H1 (cell line): ENCODE measurements at regions of chr3 and their contacts with region 1.

Region 1: GRCh38 chr3:34106879-34107278 is 308.4 kb downstream of the PDCD6IP start:
- DNase-seq: peak; percentile 58 to 73
- H3K4me3 ChIP-seq: no peak overlapping the region
- H3K27ac ChIP-seq: no peak overlapping the region
- H3K4me1 ChIP-seq: no peaks in the 10 kb centered on the region
- H3K27me3 ChIP-seq: no peaks in the 10 kb centered on the region
- CTCF ChIP-seq: peak; percentile 60 to 92 (median 80)
- EP300 ChIP-seq: no peak
- POLR2A ChIP-seq: no peak
- RAD21 ChIP-seq: peak; percentile 86 to 88

Region 2: GRCh38 chr3:34008191-34008590 is 98.7 kb before region 1 on chr3:
- CTCF ChIA-PET with region 1: no interaction called
- POLR2A ChIA-PET with region 1: no interaction called
- DNase-seq: peak in 1 of 2 experiments; percentile 43
- H3K4me3 ChIP-seq: no peak overlapping the region
- H3K27ac ChIP-seq: no peak overlapping the region
- H3K4me1 ChIP-seq: peaks cover 0 to 10% (median 6%) of the 10 kb centered on the region in 4 experiments; a peak in 4 of 7 replicates
- H3K27me3 ChIP-seq: no peaks in the 10 kb centered on the region
- CTCF ChIP-seq: no peak
- EP300 ChIP-seq: no peak
- POLR2A ChIP-seq: no peak
- RAD21 ChIP-seq: no peak

Region 3: DNA sequence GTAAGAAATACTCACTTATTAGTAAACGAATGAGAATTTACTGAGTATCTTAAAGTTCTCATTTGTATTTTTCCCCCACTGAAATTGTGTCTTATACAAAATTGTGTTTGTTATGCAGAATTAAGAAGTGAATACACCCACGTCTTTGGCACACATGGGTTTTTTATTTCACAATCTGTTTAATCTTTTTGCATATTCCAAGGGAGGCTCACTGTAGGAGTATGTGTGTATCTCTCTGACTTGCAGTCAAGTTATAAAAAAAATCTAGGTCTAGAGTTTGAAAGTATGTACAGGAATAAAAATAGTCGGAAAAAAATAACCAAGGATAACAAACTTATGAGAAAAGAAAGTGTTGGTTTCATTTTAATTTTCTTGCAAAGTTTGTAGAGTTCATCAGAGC is 53.3 kb before region 1 on chr3:
- CTCF ChIA-PET with region 1: no interaction called
- POLR2A ChIA-PET with region 1: no interaction called
- DNase-seq: no peak
- H3K4me3 ChIP-seq: no peak overlapping the region
- H3K27ac ChIP-seq: no peak overlapping the region
- H3K4me1 ChIP-seq: no peaks in the 10 kb centered on the region
- H3K27me3 ChIP-seq: no peaks in the 10 kb centered on the region
- CTCF ChIP-seq: no peak
- EP300 ChIP-seq: no peak
- POLR2A ChIP-seq: no peak
- RAD21 ChIP-seq: no peak

Region 4: GRCh38 chr3:34150992-34151391 is 44.1 kb after region 1 on chr3:
- CTCF ChIA-PET with region 1: no interaction called
- POLR2A ChIA-PET with region 1: no interaction called
- DNase-seq: no peak
- H3K4me3 ChIP-seq: no peak overlapping the region
- H3K27ac ChIP-seq: no peak overlapping the region
- H3K4me1 ChIP-seq: 0 out of 7 replicates have a peak, but pooled peaks cover 0 to under 1% (median 0%) of the 10 kb centered on the region in 4 experiments
- H3K27me3 ChIP-seq: no peaks in the 10 kb centered on the region
- CTCF ChIP-seq: no peak
- EP300 ChIP-seq: no peak
- POLR2A ChIP-seq: no peak
- RAD21 ChIP-seq: no peak

Region 5: DNA sequence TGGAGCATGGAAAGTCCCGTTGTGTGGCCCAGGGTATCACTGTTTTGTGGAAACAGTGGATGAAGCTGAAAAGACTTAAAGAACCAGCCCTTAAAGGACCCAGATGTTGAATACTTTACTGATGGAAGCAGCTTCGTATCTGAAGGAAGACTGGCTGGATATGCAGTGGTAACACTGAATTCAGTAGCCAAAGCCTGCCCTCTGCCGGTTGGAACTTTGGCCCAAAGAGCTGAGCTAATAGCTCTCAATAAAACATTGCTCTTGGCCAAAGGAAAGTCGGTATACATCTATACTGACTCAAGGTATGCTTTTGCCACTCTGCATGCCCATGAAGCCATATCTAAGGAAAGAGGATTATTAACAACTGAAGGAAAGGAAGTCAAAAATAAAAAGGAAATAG is 577.0 kb after region 1 on chr3:
- CTCF ChIA-PET with region 1: interaction called, 11 read pairs
- POLR2A ChIA-PET with region 1: no interaction called
- DNase-seq: peak; percentile 41 to 79
- H3K4me3 ChIP-seq: no peak overlapping the region
- H3K27ac ChIP-seq: no peak overlapping the region
- H3K4me1 ChIP-seq: no peaks in the 10 kb centered on the region
- H3K27me3 ChIP-seq: no peaks in the 10 kb centered on the region
- CTCF ChIP-seq: peak; percentile 33 to 83 (median 66)
- EP300 ChIP-seq: no peak
- POLR2A ChIP-seq: no peak
- RAD21 ChIP-seq: peak; percentile 86 to 91